ENCODE measurements at regions of chr5 and their contacts with region 1.

Region 1: DNA sequence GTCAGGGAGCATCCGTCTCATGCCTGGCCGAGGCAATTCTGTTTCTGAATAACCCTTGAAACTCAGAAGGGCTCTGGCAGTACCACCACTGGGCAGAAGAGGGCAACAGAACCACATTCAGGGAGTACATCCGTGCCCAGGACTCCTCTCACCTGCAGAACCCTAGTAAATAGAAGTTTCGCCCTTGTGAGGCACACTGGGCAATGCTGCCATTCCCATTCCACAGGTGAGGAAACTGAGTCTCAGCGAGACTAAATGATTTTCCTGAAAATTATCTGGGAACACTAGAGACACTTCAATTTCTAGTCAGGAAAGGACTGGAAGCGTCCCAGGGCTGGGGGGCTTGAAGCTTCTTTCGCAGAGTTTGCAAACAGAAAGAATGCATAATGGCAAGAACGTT is 74.7 kb downstream of the FGF1 start:
- DNase-seq: peak; percentile 73
- H3K4me3 ChIP-seq: no peak overlapping the region
- H3K27ac ChIP-seq: no peak overlapping the region
- H3K4me1 ChIP-seq: peaks cover 13% of the 10 kb centered on the region
- H3K27me3 ChIP-seq: no peaks in the 10 kb centered on the region
- CTCF ChIP-seq: peak; percentile 82

Region 2: GRCh38 chr5:142644640-142645361 is 33.6 kb after region 1 on chr5:
- CTCF ChIA-PET with region 1: no interaction called
- POLR2A ChIA-PET with region 1: no interaction called
- intact Hi-C with region 1: no loop called
- DNase-seq: peak; percentile 94
- H3K4me3 ChIP-seq: peak overlapping the region; percentile 2
- H3K27ac ChIP-seq: no peak overlapping the region
- H3K4me1 ChIP-seq: peaks cover 36% of the 10 kb centered on the region
- H3K27me3 ChIP-seq: no peaks in the 10 kb centered on the region
- CTCF ChIP-seq: no peak

Region 3: DNA sequence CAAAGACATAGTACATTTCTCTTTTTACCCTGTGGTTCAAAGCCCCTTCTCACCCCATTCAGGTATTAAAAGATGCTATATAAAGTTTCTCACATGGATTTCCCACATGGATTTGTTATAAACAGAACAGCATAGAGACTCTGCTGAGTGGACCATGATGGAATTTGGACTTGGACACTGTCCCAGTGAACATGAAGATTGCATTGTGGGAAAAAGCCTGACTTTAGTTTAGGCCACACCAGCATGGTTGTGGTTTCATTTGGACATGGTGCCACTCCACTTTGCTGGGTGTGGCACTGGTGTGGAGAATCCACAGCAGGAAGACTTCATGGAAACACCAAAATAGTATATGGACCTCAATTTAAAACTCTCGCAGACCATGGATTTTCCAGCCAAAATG is 283.6 kb after region 1 on chr5:
- CTCF ChIA-PET with region 1: no interaction called
- POLR2A ChIA-PET with region 1: no interaction called
- intact Hi-C with region 1: loop called (anchors 5 kb)
- DNase-seq: no peak
- H3K4me3 ChIP-seq: no peak overlapping the region
- H3K27ac ChIP-seq: no peak overlapping the region
- H3K4me1 ChIP-seq: peaks cover 13% of the 10 kb centered on the region
- H3K27me3 ChIP-seq: no peaks in the 10 kb centered on the region
- CTCF ChIP-seq: no peak